ENCODE measurements at regions of chr18 and their contacts with region 1.

Region 1: DNA sequence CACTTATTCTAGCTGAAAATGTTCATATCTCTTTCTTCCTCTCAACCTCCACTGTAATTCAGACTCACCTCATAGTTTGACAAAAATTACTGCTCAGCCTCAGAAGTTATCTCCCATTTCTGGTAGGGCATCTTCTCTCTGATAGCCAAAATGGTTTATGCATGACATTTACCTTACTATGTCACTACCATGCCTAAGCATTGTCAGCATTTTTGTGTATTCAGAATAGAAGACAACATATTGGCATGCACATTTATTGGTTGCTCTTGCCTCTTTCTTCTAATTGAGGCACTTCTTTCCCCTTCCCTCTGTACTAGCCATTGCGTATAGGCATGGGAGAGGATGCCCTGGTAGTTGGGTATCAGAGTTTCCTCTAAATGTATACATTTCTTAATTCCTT is 406.1 kb upstream of the DCC start:
- DNase-seq: no peak
- H3K4me3 ChIP-seq: no peak overlapping the region
- H3K27ac ChIP-seq: no peak overlapping the region
- H3K4me1 ChIP-seq: no peaks in the 10 kb centered on the region
- H3K27me3 ChIP-seq: no peaks in the 10 kb centered on the region

Region 2: DNA sequence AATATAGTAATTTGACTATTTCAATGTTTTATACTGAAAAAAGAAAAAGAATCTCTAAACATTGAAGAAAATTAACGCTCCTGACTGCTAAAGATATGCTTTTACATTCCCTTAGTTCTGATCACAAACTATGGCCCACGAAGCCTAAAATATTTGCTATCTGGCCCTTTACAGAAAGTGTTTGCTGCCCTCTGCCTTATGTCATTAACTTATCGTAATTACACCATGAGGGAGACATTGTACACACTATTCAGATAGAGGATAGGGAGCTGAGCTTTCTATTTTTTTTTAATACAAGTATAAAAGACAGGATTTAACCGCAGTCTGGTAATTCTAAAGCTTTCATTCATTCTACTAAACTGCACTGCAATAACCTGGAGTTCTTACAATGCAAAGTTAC is 13.0 kb after region 1 on chr18:
- CTCF ChIA-PET with region 1: no interaction called
- POLR2A ChIA-PET with region 1: no interaction called
- DNase-seq: no peak
- H3K4me3 ChIP-seq: no peak overlapping the region
- H3K27ac ChIP-seq: no peak overlapping the region
- H3K4me1 ChIP-seq: no peaks in the 10 kb centered on the region
- H3K27me3 ChIP-seq: no peaks in the 10 kb centered on the region

Region 3: DNA sequence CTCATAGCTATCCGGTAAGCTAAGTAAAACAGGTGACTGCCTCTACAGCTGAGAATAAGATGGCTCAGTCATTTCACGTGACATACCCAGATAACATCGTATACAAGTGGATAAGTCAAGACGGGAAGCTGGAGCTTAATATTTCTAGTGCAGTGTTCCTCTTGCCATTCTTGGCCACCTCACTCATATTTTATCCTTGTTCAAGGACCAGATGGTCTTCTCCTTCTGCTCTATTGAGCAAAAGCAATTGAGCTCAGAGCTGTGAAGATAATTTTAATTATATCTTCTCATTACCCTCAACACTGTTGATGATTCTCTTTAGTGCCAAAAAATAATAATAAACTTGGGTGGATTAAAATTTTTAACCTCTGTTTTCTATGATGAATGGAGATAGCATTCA is 607.2 kb after region 1 on chr18:
- CTCF ChIA-PET with region 1: no interaction called
- POLR2A ChIA-PET with region 1: interaction called, 10 read pairs
- DNase-seq: no peak
- H3K4me3 ChIP-seq: no peak overlapping the region
- H3K27ac ChIP-seq: no peak overlapping the region
- H3K4me1 ChIP-seq: peaks cover 0 to 4% (median 0%) of the 10 kb centered on the region in 4 experiments
- H3K27me3 ChIP-seq: no peaks in the 10 kb centered on the region